Dendritic cell treated with granulocyte-macrophage colony-stimulating factor and Interleukin-4, amounts not matched to agents 40 ng/mL and 50 ng/mL, for 4 days (primary cell): ENCODE measurements at regions of chr4 and their contacts with region 1.

Region 1: DNA sequence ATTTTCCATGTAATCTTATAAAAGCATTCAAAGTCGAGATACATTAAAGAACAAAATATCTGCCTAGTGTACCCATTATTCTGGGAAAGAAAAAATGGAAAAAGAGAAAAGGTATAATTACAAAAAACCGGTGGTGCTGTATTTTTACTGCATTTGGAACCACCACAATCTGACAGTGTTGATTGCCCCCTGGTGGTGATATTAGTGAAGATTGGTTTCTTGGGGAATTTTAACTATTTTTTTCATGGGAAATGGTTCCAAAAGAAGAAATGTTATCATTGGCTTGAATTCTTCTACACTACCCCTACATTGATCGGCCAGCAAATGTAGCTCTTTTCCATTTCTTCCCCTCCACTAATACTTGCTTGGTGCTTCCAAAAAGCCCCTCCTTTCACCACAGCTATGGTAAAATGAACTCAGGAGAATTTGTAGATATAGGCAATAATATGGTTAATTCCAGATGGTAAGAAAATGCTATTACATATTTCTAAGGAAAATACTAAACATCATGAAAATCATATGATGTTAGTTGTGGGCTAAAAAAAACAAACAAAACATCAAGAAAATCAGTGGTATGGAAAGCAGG is 50.0 kb downstream of the COX18 start:
- H3K4me3 Mint-ChIP-seq: no peak overlapping the region
- H3K27ac Mint-ChIP-seq: no peak overlapping the region
- H3K4me1 Mint-ChIP-seq: no peaks in the 10 kb centered on the region
- H3K27me3 Mint-ChIP-seq: peaks cover 3% of the 10 kb centered on the region

Region 2: GRCh38 chr4:72505314-72505744 is 514.2 kb before region 1 on chr4:
- intact Hi-C with region 1: loop called (anchors 5 kb)
- H3K4me3 Mint-ChIP-seq: no peak overlapping the region
- H3K27ac Mint-ChIP-seq: no peak overlapping the region
- H3K4me1 Mint-ChIP-seq: no peaks in the 10 kb centered on the region
- H3K27me3 Mint-ChIP-seq: no peaks in the 10 kb centered on the region

Region 3: DNA sequence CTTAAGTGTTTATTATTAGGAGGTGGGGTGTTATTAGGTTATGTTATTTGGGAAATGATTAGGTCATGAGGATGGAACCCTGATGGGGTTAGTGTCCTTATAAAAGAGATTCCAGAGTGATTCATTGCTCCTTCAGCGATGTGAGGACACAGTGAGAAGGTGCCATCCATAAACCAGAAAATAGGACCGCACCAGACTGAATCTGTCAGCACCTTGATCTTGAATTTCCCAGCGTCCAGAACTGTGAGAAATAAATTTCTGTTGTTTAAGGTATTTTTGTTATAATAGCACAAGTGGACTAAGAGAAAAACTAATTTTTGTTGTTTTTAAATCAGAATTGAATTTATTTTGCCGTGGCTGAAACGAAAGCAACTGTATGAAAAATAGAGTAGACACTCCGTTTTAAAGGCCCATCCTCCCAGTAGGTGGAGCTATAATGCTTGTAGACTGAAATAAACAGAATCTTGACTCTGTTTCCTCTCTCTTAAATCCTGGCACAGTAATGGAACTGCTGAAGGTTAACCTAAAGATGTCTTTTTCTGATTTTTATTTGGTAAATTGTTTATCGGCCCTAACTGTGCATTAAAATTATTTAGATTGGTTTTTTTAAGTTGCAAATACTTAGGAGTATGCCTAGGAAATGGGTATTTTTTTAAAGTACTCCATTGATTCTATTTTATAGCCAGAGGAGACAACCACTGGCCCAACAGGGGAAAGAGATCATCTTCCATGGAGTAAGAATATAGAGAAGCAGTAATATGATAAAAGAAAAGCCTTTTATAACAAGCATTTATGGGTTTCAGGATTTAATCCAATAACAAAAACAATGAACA is 317.4 kb before region 1 on chr4:
- intact Hi-C with region 1: loop called (anchors 2 kb)
- H3K4me3 Mint-ChIP-seq: peak overlapping the region; percentile 64
- H3K27ac Mint-ChIP-seq: no peak overlapping the region
- H3K4me1 Mint-ChIP-seq: no peaks in the 10 kb centered on the region
- H3K27me3 Mint-ChIP-seq: no peaks in the 10 kb centered on the region